CD8-positive, alpha-beta T cell (primary cell): ENCODE measurements at regions of chr12 and their contacts with region 1.

Region 1: GRCh38 chr12:6851921-6852650 is at the start of gene USP5:
- DNase-seq: peak; percentile 94 to 100 (median 98)
- ATAC-seq: peak; percentile 75
- H3K4me3 ChIP-seq: peak within 1 kb of the TSS; percentile 88 to 89
- H3K4me3 Mint-ChIP-seq: peak within 1 kb of the TSS; percentile 95
- H3K27ac ChIP-seq: peak within 1 kb of the TSS; percentile 78 to 91
- H3K27ac Mint-ChIP-seq: peak within 1 kb of the TSS; percentile 99
- H3K4me1 ChIP-seq: peaks cover 20% of the 10 kb centered on the region
- H3K4me1 Mint-ChIP-seq: peaks cover 22% of the 10 kb centered on the region
- H3K27me3 ChIP-seq: no peaks in the 10 kb centered on the region
- H3K27me3 Mint-ChIP-seq: no peaks in the 10 kb centered on the region
- CTCF ChIP-seq: no peak
- total RNA-seq, gene USP5: 24.0 to 25.9 TPM

Region 2: GRCh38 chr12:6434205-6435140 is 417.6 kb before region 1 on chr12:
- CTCF ChIA-PET with region 1: no interaction called
- POLR2A ChIA-PET with region 1: no interaction called
- intact Hi-C with region 1: no loop called
- DNase-seq: peak in 5 of 9 experiments; percentile 44 to 73 (median 57)
- ATAC-seq: peak; percentile 83
- H3K4me3 ChIP-seq: peak overlapping the region in 1 of 2 experiments; percentile 38
- H3K4me3 Mint-ChIP-seq: peak overlapping the region; percentile 66
- H3K27ac ChIP-seq: peak overlapping the region; percentile 31 to 74
- H3K27ac Mint-ChIP-seq: peak overlapping the region; percentile 93
- H3K4me1 ChIP-seq: peaks cover 33% of the 10 kb centered on the region
- H3K4me1 Mint-ChIP-seq: peaks cover 48% of the 10 kb centered on the region
- H3K27me3 ChIP-seq: no peaks in the 10 kb centered on the region
- H3K27me3 Mint-ChIP-seq: no peaks in the 10 kb centered on the region
- CTCF ChIP-seq: no peak

Region 3: DNA sequence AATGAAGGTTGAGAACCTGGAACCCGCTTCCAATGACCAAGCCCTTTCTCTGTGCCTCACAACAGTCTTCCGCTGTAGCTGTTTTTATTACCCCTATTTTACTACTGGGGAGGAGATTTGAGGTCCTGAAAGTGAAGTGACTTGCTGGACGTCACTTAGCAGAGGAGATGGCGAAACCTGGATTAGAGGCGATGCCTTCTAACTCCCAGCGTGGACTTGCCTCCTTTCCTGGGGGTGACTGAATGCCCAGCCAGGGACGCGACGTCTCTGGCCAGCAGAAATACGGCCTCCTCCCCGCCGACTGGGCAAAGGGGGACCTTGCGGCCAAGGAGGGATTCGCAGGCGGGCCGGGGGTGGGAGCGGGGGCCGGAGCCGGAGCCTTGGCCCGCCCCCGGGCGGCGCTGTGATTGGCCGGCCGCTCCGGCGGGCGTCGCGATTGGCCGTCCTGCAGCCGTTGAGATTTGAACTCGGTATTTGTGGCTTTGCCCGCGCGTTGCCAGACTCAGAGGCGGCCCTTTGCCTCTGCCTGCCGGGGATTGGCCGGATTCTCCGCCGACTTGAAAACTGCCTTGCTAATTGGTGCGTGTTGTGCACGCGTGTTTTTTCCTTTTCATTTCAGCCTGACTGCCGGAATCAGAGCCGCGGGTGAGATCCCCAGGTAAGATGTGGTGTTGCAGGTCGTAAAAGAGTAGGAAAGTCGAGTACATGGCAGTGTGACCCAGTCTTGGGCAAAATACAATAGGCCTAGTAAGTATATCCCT is 358.4 kb before region 1 on chr12 and contains the start of gene NCAPD2:
- CTCF ChIA-PET with region 1: no interaction called
- POLR2A ChIA-PET with region 1: no interaction called
- intact Hi-C with region 1: loop called in 1 of 2 experiments (anchors 1 kb)
- DNase-seq: peak; percentile 88 to 98 (median 94)
- ATAC-seq: peak; percentile 80
- H3K4me3 ChIP-seq: peak within 1 kb of the TSS; percentile 86 to 93
- H3K4me3 Mint-ChIP-seq: peak within 1 kb of the TSS; percentile 96
- H3K27ac ChIP-seq: peak within 1 kb of the TSS; percentile 72 to 93
- H3K27ac Mint-ChIP-seq: peak within 1 kb of the TSS; percentile 98
- H3K4me1 ChIP-seq: peaks cover 26% of the 10 kb centered on the region
- H3K4me1 Mint-ChIP-seq: peaks cover 41% of the 10 kb centered on the region
- H3K27me3 ChIP-seq: no peaks in the 10 kb centered on the region
- H3K27me3 Mint-ChIP-seq: no peaks in the 10 kb centered on the region
- CTCF ChIP-seq: no peak
- total RNA-seq, gene NCAPD2: 11.7 to 13.4 TPM

Region 4: DNA sequence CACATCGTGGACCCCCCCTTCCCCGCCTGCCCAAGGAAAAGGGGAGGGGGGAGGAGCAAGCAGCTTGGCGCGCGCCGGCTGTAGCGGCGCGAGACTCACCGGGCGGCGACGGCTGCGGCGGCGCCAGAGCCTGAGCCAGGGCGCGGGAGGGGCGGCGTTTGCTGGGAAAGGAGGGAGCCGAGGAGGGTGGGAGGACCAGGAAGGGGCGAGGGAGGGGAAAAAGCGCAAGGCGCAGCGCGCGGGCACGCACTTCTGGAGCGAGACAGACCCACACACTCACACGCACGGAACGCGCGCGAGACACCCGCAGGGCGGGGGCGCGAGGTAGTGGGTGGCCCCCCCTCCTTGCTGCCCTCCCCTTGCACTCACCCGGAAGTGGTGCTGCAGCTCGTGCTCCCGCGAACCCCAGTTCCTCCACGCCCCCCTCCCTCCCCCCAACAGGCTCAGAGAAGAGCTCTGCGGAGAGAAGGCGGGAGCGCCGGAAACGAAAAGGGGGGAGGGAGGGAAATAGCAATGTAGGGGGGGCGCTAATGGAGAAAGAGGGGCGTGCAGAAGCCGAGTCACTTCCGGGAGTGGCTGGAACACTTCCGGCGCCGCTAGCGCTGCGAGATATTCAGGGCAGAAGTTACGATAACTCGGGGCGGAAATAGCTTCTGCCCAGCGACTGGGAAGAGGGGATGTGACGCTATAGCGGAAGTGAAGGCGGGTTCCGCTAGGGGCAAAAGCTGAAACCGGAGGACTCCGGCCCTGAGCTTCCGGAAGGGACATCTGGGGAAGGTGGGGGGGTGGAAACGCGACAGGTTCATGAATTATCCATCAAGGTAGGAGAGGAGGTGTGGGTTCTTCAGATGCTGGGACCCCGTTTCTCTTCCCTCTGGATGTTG is 162.8 kb before region 1 on chr12 and contains the start of gene ZNF384:
- CTCF ChIA-PET with region 1: no interaction called
- POLR2A ChIA-PET with region 1: interaction called, 20 read pairs
- intact Hi-C with region 1: loop called in 1 of 2 experiments (anchors 1 kb)
- DNase-seq: peak; percentile 89 to 99 (median 96)
- ATAC-seq: peak; percentile 78
- H3K4me3 ChIP-seq: peak within 1 kb of the TSS; percentile 60 to 77
- H3K4me3 Mint-ChIP-seq: peak within 1 kb of the TSS; percentile 94
- H3K27ac ChIP-seq: peak within 1 kb of the TSS; percentile 89 to 91
- H3K27ac Mint-ChIP-seq: peak within 1 kb of the TSS; percentile 98
- H3K4me1 ChIP-seq: peaks cover 33% of the 10 kb centered on the region
- H3K4me1 Mint-ChIP-seq: peaks cover 55% of the 10 kb centered on the region
- H3K27me3 ChIP-seq: no peaks in the 10 kb centered on the region
- H3K27me3 Mint-ChIP-seq: no peaks in the 10 kb centered on the region
- CTCF ChIP-seq: no peak
- total RNA-seq, gene ZNF384: 61.8 to 63.8 TPM

Region 5: GRCh38 chr12:6867413-6868210 is 15.5 kb after region 1 on chr12 and contains the start of gene TPI1:
- CTCF ChIA-PET with region 1: interaction called, 126 read pairs
- POLR2A ChIA-PET with region 1: interaction called, 61 read pairs
- intact Hi-C with region 1: loop called (anchors 1 kb)
- DNase-seq: peak; percentile 48 to 86 (median 77)
- ATAC-seq: peak; percentile 70
- H3K4me3 ChIP-seq: peak within 1 kb of the TSS; percentile 54 to 64
- H3K4me3 Mint-ChIP-seq: peak within 1 kb of the TSS; percentile 89
- H3K27ac ChIP-seq: peak within 1 kb of the TSS; percentile 53 to 81
- H3K27ac Mint-ChIP-seq: peak within 1 kb of the TSS; percentile 85
- H3K4me1 ChIP-seq: peaks cover 49% of the 10 kb centered on the region
- H3K4me1 Mint-ChIP-seq: peaks cover 57% of the 10 kb centered on the region
- H3K27me3 ChIP-seq: no peaks in the 10 kb centered on the region
- H3K27me3 Mint-ChIP-seq: no peaks in the 10 kb centered on the region
- CTCF ChIP-seq: no peak
- total RNA-seq, gene TPI1: 59.6 to 64.0 TPM

Region 6: DNA sequence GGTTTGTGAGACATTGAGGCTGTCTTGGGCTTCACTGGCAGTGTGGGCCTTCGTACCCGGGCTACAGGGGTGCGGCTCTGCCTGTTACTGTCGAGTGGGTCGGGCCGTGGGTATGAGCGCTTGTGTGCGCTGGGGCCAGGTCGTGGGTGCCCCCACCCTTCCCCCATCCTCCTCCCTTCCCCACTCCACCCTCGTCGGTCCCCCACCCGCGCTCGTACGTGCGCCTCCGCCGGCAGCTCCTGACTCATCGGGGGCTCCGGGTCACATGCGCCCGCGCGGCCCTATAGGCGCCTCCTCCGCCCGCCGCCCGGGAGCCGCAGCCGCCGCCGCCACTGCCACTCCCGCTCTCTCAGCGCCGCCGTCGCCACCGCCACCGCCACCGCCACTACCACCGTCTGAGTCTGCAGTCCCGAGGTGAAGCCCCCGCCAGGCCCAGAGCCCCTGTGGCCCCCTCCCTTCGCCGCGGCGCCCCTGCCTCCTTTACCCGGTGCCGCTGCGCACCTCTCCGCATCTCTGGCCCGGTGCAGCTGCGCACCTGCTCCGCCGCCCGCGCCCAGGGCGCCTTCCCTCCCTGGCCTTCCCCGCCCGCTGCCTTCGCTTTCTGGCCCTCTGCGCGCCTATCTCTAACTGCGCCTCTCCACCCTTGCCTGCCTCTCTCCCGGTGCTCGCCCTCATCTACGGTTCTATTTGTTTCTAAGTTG is 62.3 kb after region 1 on chr12 and contains the start of gene ENO2:
- CTCF ChIA-PET with region 1: no interaction called
- POLR2A ChIA-PET with region 1: interaction called, 4 read pairs
- intact Hi-C with region 1: loop called in 1 of 2 experiments (anchors 1 kb)
- DNase-seq: peak; percentile 59 to 92 (median 89)
- ATAC-seq: peak; percentile 94
- H3K4me3 ChIP-seq: peak within 1 kb of the TSS; percentile 52 to 83
- H3K4me3 Mint-ChIP-seq: peak within 1 kb of the TSS; percentile 95
- H3K27ac ChIP-seq: peak within 1 kb of the TSS; percentile 77 to 88
- H3K27ac Mint-ChIP-seq: peak within 1 kb of the TSS; percentile 95
- H3K4me1 ChIP-seq: peaks cover 18% of the 10 kb centered on the region
- H3K4me1 Mint-ChIP-seq: peaks cover 31% of the 10 kb centered on the region
- H3K27me3 ChIP-seq: no peaks in the 10 kb centered on the region
- H3K27me3 Mint-ChIP-seq: no peaks in the 10 kb centered on the region
- CTCF ChIP-seq: no peak
- total RNA-seq, gene ENO2: 95.5 to 99.6 TPM

Region 7: DNA sequence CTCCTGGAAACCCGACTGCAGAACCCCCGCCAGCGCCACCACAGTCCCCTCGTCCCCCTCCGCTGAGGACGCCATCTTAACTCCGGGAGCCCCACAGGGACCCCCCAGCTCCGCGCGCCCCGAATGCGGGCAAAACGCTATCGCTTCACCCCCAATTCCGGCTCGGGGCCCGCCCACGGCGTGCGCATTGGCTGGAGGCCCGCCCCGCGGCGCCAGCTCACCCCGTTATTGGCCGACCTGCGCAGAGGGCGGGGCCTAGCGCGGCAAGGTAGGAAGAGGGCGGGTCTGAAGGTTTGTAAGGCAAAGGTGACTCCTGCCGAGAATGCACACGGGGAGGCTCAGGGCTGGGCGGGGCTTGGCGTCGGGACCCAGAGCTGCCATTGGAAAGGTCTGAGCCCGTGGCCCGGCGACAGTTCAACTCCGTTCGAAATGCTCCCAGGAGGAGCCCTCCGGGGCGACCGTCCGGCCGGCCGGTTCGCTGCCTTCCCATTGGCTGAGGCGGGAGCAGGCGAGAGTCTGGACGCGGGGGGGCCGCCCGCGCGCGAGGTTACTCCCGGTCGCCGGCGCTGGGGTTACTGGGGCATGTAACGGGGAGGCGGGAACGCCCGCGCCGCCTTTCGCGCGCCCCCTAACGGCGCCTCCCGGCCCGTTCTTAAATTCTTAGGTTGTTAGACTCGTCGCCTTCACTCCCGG is 166.4 kb after region 1 on chr12 and contains the start of gene LPCAT3:
- CTCF ChIA-PET with region 1: no interaction called
- POLR2A ChIA-PET with region 1: interaction called, 3 read pairs
- intact Hi-C with region 1: loop called (anchors 1 to 5 kb)
- DNase-seq: peak; percentile 94 to 99 (median 97)
- ATAC-seq: peak; percentile 97
- H3K4me3 ChIP-seq: peak within 1 kb of the TSS; percentile 82 to 99
- H3K4me3 Mint-ChIP-seq: peak within 1 kb of the TSS; percentile 90
- H3K27ac ChIP-seq: peak within 1 kb of the TSS; percentile 79 to 92
- H3K27ac Mint-ChIP-seq: peak within 1 kb of the TSS; percentile 88
- H3K4me1 ChIP-seq: peaks cover 13% of the 10 kb centered on the region
- H3K4me1 Mint-ChIP-seq: peaks cover 37% of the 10 kb centered on the region
- H3K27me3 ChIP-seq: no peaks in the 10 kb centered on the region
- H3K27me3 Mint-ChIP-seq: no peaks in the 10 kb centered on the region
- CTCF ChIP-seq: peak; percentile 85
- total RNA-seq, gene LPCAT3: 24.4 to 27.1 TPM